ENCODE measurements at regions of chr3 and their contacts with region 1.

Region 1: DNA sequence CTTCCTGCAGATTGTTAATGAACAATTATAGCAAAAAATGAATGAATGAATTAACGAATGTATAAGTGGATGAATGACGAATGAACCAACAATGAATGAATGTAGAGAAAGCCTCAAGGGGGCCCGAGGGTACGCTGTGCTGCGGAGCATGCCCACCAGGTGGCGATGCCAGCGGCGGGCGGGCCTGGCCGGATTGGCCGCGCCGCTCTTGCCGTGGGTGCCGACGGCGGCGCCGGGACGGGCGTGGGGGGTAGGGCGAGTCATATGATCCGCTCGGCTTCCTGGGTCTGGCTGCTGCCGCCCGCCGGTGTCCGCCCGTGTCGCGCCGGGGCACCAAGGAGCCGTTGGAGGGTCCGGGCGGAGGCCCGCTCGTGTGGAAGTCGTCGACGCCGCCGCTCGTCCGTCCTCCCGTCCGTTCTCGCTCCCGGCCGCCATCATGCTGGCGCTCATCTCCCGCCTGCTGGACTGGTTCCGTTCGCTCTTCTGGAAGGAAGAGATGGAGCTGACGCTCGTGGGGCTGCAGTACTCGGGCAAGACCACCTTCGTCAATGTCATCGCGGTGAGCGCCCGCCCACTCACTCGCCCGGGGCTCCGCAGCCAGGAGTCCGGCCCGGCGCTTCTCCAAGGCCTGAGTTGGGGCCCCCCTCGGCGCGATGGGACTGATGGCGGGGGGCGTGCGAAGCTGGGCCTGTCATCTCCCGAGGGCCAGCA is at the start of gene ARL8B:
- DNase-seq: peak; percentile 91
- H3K4me3 ChIP-seq: peak within 1 kb of the TSS; percentile 98
- H3K27ac ChIP-seq: peak within 1 kb of the TSS; percentile 86
- H3K4me1 ChIP-seq: peaks cover 12% of the 10 kb centered on the region
- H3K27me3 ChIP-seq: no peaks in the 10 kb centered on the region
- CTCF ChIP-seq: peak; percentile 91
- total RNA-seq, gene ARL8B: 44.7 and 54.0 TPM in 2 replicates

Region 2: DNA sequence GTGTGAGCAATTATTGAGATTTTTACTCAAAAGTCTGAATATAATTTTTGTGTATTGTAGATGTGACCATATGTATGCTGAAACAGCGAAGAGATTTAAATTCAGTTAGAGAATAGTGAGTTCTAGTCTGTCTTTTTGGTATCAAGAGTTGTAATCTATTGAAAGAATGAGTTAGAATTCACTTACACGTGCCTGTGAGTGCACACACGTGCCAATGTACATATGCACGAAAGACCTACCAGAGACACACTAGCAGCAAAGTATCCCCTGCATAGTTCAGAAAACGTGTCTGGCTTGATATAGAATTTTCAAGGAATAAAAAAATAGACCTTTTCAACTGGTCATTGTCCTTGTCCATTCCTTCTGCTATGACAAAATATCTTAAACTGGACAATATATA is 207.7 kb before region 1 on chr3:
- CTCF ChIA-PET with region 1: no interaction called
- POLR2A ChIA-PET with region 1: no interaction called
- intact Hi-C with region 1: no loop called
- DNase-seq: no peak
- H3K4me3 ChIP-seq: no peak overlapping the region
- H3K27ac ChIP-seq: no peak overlapping the region
- H3K4me1 ChIP-seq: no peaks in the 10 kb centered on the region
- H3K27me3 ChIP-seq: no peaks in the 10 kb centered on the region
- CTCF ChIP-seq: no peak

Region 3: DNA sequence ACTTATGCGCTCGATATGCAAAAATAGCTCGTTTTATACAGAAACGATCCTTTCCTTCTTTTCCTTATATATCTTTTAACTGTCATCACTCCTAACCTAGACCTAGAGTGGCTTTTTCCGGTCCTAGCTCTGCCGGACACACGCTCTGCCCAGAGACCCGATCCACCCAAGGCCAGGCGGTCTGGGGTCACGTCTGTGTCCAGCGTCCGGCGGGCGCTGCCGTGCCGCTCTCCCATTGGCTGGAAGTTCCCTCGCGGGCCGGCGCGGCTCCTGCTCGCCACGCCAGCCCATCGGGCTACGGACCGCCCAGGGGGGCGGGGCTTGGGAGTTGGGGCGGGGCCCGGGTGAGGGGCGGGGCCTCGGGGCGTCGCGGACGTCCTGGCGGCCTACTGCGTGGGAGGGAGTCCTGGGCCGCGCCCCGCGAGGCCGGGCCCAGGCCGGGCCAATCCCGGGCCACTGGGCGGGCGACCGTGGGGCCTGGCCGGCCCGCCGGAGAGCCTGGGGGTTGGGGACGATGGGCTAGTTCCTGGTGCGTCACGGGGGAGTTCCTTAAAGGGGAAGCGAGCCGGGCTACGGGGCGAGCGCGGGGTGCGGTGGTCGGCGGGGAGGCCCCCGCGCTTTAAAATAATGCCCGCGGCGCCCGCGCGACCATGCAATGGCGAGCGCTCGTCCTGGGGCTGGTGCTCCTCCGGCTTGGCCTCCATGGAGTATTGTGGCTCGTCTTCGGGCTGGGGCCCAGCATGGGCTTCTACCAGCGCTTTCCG is 65.2 kb after region 1 on chr3 and contains the start of gene EDEM1:
- CTCF ChIA-PET with region 1: interaction called, 3 read pairs
- POLR2A ChIA-PET with region 1: interaction called, 9 read pairs
- intact Hi-C with region 1: loop called (anchors 5 kb)
- DNase-seq: peak; percentile 94
- H3K4me3 ChIP-seq: peak within 1 kb of the TSS; percentile 73
- H3K27ac ChIP-seq: peak within 1 kb of the TSS; percentile 97
- H3K4me1 ChIP-seq: peaks cover 5% of the 10 kb centered on the region
- H3K27me3 ChIP-seq: no peaks in the 10 kb centered on the region
- CTCF ChIP-seq: no peak
- total RNA-seq, gene EDEM1: 31.4 and 32.1 TPM in 2 replicates

Region 4: DNA sequence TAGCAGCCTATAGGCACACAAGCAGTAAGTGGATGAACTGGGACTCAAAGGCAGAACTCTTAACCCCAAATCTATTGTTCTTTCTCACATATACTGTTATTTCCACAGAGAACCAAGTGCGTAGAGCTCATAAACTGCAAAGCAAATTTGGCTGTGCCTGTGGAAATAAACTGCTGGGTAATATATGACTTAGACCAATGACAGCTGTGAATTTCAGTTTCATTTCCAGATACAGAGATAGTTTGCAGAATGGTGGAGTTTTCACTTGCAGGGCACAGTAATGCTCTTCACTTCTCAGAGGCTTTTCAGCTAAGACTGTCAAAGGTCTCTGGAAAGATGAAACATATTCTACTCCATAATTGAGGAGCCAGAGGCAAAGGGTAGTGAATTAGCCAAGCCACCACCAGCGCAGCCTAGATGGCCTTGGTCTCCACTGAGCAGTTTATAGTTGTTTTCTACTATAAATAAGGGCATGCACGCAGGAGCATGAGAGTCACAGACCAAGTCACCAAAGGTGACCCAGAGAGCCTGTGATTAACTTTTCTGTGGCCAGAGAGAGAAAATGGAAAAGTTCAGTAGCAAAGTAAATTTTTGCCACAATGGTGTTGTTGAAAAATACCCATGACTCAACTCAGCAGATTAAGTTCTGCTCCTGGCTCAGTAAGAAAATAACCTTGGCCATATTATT is 1558.1 kb after region 1 on chr3:
- CTCF ChIA-PET with region 1: no interaction called
- POLR2A ChIA-PET with region 1: no interaction called
- intact Hi-C with region 1: no loop called
- DNase-seq: no peak
- H3K4me3 ChIP-seq: no peak overlapping the region
- H3K27ac ChIP-seq: no peak overlapping the region
- H3K4me1 ChIP-seq: no peaks in the 10 kb centered on the region
- H3K27me3 ChIP-seq: no peaks in the 10 kb centered on the region
- CTCF ChIP-seq: no peak